ENCODE measurements at regions of chr15 and their contacts with region 1.

Region 1: DNA sequence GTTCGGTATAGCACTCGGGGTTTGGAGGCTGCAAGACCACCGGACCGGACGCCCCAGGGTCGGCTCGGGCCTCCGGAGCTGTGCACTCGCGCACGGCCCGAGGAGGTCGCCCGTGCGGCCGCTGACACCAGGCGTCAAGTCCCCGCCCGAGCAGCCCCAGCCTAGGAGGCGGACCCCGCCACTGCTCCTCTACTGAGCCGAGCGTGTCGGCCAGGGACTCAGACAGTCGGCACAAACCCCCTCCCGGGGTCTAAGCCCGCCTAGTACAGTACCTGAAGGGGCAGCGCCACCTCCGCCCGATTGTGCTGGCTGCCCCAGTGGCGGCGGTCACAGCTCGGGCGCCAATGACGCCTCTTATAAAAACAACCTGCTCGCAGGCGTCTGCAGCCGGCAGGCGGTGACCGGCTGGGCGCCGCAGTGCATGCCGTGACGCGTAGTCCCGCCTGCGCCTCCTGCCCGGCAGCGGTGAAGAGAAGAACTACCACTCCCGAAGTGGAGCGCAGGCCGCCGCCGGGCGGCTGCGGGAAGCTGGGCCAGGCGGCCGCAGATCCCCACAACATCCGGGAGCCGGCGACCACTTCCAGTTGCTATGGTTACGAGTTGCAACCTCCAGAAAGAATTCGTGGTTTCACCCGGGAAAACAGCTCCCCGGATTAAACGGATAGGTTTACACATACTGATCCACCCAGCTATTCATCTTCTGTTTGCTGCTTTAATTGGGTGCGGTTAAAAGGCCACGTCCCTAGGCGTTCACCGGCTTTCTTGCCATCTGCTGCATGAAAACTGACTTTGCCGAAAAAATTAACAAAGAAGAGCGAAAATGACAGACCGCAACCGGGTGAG is at the starts of genes CCPG1 and PIERCE2:
- DNase-seq: peak; percentile 89
- ATAC-seq: peak; percentile 93
- H3K4me3 ChIP-seq: peak within 1 kb of the TSS; percentile 63 to 65
- H3K27ac ChIP-seq: peak within 1 kb of the TSS; percentile 66
- H3K4me1 ChIP-seq: peaks cover 0 to 6% of the 10 kb centered on the region in 2 experiments; a peak in 3 of 4 replicates
- H3K27me3 ChIP-seq: no peaks in the 10 kb centered on the region
- CTCF ChIP-seq: peak; percentile 57 to 74 (median 69); a peak in 5 of 6 replicates
- POLR2A ChIP-seq: no peak
- RAD21 ChIP-seq: peak; percentile 27
- total RNA-seq, gene CCPG1: 8.5 TPM
- total RNA-seq, gene PIERCE2: 2.0 TPM

Region 2: GRCh38 chr15:55318588-55319494 is 89.3 kb before region 1 on chr15 and contains the starts of genes PIGB and PIGBOS1:
- CTCF ChIA-PET with region 1: interaction called, 5 read pairs
- POLR2A ChIA-PET with region 1: interaction called, 9 read pairs
- RAD21 ChIA-PET with region 1: interaction called in 1 of 2 experiments, 3 read pairs
- intact Hi-C with region 1: loop called (anchors 1 kb)
- DNase-seq: peak; percentile 79
- ATAC-seq: peak; percentile 92
- H3K4me3 ChIP-seq: peak within 1 kb of the TSS; percentile 85 to 89
- H3K27ac ChIP-seq: peak within 1 kb of the TSS; percentile 89
- H3K4me1 ChIP-seq: peaks cover 6 to 11% of the 10 kb centered on the region in 2 experiments; a peak in 3 of 4 replicates
- H3K27me3 ChIP-seq: no peaks in the 10 kb centered on the region
- CTCF ChIP-seq: no peak
- POLR2A ChIP-seq: peak; percentile 42
- RAD21 ChIP-seq: no peak
- total RNA-seq, gene PIGB: 15.1 TPM
- total RNA-seq, gene PIGBOS1: 15.3 TPM

Region 3: DNA sequence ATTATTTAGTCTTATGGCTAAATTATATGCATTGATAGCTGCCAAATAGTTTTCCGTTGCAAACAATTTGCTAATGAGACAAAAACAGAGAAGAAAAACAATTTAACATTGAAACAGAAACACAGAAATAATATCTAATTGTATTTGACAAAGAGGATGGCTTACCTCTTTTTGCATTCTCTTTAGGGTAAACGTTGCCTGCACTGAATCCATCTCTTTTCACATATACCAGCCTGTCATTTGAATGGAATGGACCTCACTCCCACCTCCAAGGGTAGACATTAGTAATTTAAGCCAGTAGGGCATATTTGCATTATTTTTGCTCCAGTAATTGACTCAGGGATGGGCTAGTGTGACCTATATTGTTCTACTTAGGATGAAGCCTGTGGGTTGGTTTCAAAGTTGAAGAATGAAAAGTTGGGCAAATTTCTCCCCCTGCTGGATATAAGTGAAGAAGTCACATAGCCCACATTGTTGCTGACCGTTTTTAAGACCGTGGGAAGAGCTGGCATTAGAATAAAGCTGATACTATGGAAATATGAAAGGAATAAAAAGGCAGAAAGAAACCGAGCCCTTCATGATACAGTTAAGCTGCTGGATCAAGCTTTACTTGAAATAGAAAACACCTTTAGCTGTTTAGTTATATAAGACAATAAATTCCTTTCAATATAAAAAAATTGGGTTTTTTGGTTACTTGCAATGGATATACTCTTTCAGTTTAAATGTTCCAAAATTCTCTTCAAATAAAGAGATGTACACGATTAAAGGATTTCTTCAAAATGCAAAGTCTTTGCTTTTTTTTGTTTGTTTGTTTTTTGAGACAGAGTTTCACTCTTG is 27.0 kb after region 1 on chr15:
- CTCF ChIA-PET with region 1: interaction called, 21 read pairs
- POLR2A ChIA-PET with region 1: interaction called, 3 read pairs
- RAD21 ChIA-PET with region 1: no interaction called
- intact Hi-C with region 1: no loop called
- DNase-seq: peak; percentile 42
- ATAC-seq: peak; percentile 85
- H3K4me3 ChIP-seq: no peak overlapping the region
- H3K27ac ChIP-seq: no peak overlapping the region
- H3K4me1 ChIP-seq: no peaks in the 10 kb centered on the region
- H3K27me3 ChIP-seq: no peaks in the 10 kb centered on the region
- CTCF ChIP-seq: peak; percentile 39 to 69 (median 61); a peak in 5 of 6 replicates
- POLR2A ChIP-seq: no peak
- RAD21 ChIP-seq: peak; percentile 65

Region 4: GRCh38 chr15:55937040-55937439 is 528.9 kb after region 1 on chr15:
- CTCF ChIA-PET with region 1: no interaction called
- POLR2A ChIA-PET with region 1: no interaction called
- RAD21 ChIA-PET with region 1: no interaction called
- intact Hi-C with region 1: no loop called
- DNase-seq: no peak
- ATAC-seq: no peak
- H3K4me3 ChIP-seq: no peak overlapping the region
- H3K27ac ChIP-seq: no peak overlapping the region
- H3K4me1 ChIP-seq: no peaks in the 10 kb centered on the region
- H3K27me3 ChIP-seq: no peaks in the 10 kb centered on the region
- CTCF ChIP-seq: no peak
- POLR2A ChIP-seq: no peak
- RAD21 ChIP-seq: no peak